ENCODE measurements at regions of chr2 and their contacts with region 1.

Region 1: DNA sequence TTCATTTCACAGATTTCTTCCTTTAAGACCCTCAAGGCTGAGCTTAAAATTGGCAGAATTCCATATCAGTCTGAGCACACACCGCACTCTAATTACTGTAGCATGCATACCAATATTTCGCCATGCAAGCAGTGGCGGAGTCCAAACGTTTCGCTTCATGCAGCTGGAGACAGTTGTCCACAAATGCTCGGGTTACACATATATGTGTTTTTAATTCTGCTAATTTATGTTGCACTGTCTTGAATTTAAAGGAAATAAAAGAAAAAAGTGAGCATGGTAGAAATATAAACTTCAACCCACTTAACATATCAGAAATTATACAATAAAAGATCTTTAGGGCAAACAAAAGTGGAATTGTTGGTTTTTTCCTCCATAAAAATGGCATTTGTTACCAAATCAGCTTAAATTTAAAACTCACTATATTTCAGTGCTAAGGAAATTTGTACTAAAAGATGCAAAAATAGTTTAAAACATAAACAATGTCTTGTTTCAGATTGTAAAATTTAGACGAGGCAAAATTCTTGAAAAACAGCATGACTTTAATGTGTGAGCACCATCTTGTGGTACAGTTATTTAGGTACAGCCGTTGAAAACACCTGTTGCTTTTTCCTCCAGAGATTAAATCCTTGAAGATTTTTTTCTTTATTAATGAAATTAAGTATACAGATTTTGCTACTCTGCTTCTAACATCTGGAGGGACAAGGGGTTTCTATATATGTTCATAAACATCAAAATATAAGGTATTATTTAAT is 24.1 kb upstream of the KANSL1L start:
- DNase-seq: no peak
- H3K4me3 ChIP-seq: no peak overlapping the region
- H3K27ac ChIP-seq: no peak overlapping the region
- H3K4me1 ChIP-seq: no peaks in the 10 kb centered on the region
- H3K27me3 ChIP-seq: no peaks in the 10 kb centered on the region
- CTCF ChIP-seq: peak; percentile 66 to 71

Region 2: DNA sequence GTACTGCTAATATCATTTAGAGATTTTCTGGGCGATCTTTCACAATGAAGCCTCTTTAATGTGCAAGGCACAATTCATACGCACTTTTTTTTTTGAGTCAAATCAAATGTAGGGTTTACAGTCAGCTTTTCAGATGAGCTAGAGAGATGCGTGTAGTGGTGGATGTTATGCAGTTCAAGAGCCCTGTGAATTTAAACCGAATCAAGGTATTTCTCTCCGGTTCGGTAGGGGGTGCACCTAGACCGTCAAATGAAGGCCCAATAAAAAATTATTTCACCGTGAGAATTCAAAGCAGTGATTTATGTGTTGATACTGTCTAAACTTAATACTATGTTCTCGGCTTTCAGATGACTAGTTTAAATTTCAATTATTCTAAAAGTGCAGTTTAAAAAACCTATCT is 1787.6 kb before region 1 on chr2:
- CTCF ChIA-PET with region 1: no interaction called
- dilution Hi-C with region 1: no loop called
- in situ Hi-C with region 1: no loop called
- intact Hi-C with region 1: loop called (anchors 10 kb)
- DNase-seq: no peak
- H3K4me3 ChIP-seq: no peak overlapping the region
- H3K27ac ChIP-seq: no peak overlapping the region
- H3K4me1 ChIP-seq: peaks cover 5% of the 10 kb centered on the region
- H3K27me3 ChIP-seq: peaks cover 32% of the 10 kb centered on the region
- CTCF ChIP-seq: peak; percentile 11 to 39

Region 3: DNA sequence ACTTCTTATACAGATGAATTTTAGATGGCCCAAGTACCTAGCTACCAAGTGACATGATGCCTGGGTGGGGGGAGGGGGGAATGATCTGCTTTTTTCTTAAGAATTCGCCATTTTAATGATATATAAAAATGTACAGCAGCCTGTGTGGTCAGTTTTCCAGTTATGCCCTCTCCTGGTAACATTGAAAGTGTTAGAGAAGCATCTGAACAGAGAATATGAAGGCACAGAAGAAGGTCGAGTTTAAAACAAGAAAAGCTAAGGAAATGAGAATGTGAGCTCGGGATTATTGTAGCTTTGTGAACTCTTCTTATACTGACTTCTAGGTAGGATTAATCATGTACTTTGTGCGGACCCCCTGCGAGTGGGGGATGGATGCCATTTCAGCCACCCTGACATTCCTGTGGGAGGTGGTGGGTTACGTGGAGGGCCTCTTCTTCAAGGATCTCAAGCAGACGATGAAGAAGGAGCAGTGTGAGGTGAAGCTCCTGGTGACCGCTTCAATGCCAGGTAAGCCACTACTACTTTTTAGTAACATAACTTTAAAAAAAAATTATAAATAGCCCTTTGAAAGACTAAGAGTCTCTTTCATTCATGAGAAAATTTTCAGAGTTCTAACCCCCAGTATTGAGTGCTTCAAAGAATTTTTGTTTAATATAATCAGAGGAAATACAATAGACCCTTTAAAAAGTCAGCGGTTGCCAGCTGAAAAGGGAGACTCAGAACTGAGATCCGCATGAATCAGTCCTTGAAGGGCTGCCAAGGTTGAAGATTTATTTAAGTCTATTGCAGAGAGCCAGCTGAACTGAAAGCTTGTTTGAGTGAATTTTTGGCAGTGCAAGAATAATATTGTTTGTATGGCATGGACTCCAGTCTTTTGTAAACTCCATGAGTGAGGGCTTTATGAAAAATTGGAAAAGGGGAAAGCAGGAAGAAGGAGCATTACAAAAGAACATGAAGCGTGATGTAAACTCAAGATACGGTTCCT is 261.5 kb before region 1 on chr2:
- CTCF ChIA-PET with region 1: no interaction called
- dilution Hi-C with region 1: no loop called
- in situ Hi-C with region 1: no loop called
- intact Hi-C with region 1: loop called (anchors 2 kb)
- DNase-seq: peak; percentile 60
- H3K4me3 ChIP-seq: peak overlapping the region in 2 of 3 experiments; percentile 4 to 12
- H3K27ac ChIP-seq: no peak overlapping the region
- H3K4me1 ChIP-seq: no peaks in the 10 kb centered on the region
- H3K27me3 ChIP-seq: peaks cover 2% of the 10 kb centered on the region
- CTCF ChIP-seq: peak in 1 of 2 donors; percentile 8

Region 4: GRCh38 chr2:209977386-209978239 is 217.7 kb before region 1 on chr2:
- CTCF ChIA-PET with region 1: no interaction called
- dilution Hi-C with region 1: no loop called
- in situ Hi-C with region 1: loop called (anchors 5 kb)
- intact Hi-C with region 1: loop called (anchors 1 kb)
- DNase-seq: peak; percentile 9
- H3K4me3 ChIP-seq: no peak overlapping the region
- H3K27ac ChIP-seq: no peak overlapping the region
- H3K4me1 ChIP-seq: no peaks in the 10 kb centered on the region
- H3K27me3 ChIP-seq: no peaks in the 10 kb centered on the region
- CTCF ChIP-seq: peak; percentile 38 to 51

Region 5: GRCh38 chr2:210072922-210073509 is 122.3 kb before region 1 on chr2:
- CTCF ChIA-PET with region 1: no interaction called
- dilution Hi-C with region 1: no loop called
- in situ Hi-C with region 1: loop called (anchors 10 kb)
- intact Hi-C with region 1: loop called (anchors 1 kb)
- DNase-seq: peak; percentile 39
- H3K4me3 ChIP-seq: no peak overlapping the region
- H3K27ac ChIP-seq: no peak overlapping the region
- H3K4me1 ChIP-seq: no peaks in the 10 kb centered on the region
- H3K27me3 ChIP-seq: no peaks in the 10 kb centered on the region
- CTCF ChIP-seq: peak; percentile 70 to 75

Region 6: DNA sequence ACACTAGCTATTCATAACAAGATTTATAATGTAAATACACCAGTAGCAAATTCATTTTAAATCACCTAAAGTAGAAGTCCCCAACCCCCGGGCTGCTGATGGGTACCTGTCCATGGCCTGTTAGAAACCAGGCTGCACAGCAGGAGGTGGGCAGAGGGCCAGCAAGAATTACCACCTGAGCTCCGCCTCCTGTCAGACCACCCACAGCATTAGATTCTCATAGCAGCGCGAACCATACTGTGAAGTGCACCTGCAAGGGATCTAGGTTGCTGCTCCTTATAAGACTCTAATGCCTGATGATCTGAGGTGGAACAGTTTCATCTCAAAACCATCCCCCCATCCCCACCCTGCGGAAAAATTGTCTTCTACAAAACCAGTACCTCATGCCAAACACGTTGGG is 95.3 kb before region 1 on chr2:
- CTCF ChIA-PET with region 1: no interaction called
- dilution Hi-C with region 1: no loop called
- in situ Hi-C with region 1: no loop called
- intact Hi-C with region 1: no loop called
- DNase-seq: no peak
- H3K4me3 ChIP-seq: no peak overlapping the region
- H3K27ac ChIP-seq: no peak overlapping the region
- H3K4me1 ChIP-seq: no peaks in the 10 kb centered on the region
- H3K27me3 ChIP-seq: no peaks in the 10 kb centered on the region
- CTCF ChIP-seq: no peak

Measured in mammary epithelial cell (primary cell).